Lower leg skin (tissue), 4 donors: ENCODE measurements at regions of chr19 and their contacts with region 1.

Region 1: GRCh38 chr19:48271531-48272151 is 1.8 kb downstream of the ZNF114 start:
- DNase-seq: peak; percentile 29 to 88
- H3K4me3 ChIP-seq: no peak overlapping the region
- CTCF ChIP-seq: no peak
- POLR2A ChIP-seq: no peak

Region 2: GRCh38 chr19:48333467-48334384 is 62.1 kb after region 1 on chr19:
- intact Hi-C with region 1: loop called (anchors 2 kb)
- DNase-seq: peak; percentile 87 to 98
- H3K4me3 ChIP-seq: peak overlapping the region; percentile 20
- CTCF ChIP-seq: no peak
- POLR2A ChIP-seq: no peak